HepG2 (cell line): ENCODE measurements at regions of chr2 and their contacts with region 1.

Region 1: DNA sequence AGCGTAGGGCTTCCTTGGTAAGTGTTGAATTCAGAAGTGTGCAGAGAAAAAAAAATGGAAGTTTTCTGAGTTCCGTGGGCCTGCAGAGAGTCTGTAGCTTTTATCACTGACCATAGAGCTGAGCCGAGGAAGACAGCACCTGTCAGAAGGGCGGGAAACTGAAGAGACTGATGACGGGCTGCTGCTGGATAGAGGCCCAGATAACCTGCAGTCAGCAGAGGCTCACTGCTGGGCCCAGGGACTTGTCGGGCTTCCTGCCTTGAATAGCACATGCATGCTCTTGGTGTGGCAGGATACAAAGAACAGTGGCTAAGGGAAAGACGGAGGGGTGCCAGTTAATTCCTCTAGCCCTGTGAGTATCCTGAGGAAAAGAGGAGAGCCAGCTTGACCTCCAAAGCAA is 166.4 kb downstream of the MGAT5 start:
- DNase-seq: no peak
- ATAC-seq: peak; percentile 46
- H3K4me3 ChIP-seq: no peak overlapping the region
- H3K27ac ChIP-seq: no peak overlapping the region
- H3K4me1 ChIP-seq: peaks cover 64% of the 10 kb centered on the region
- H3K27me3 ChIP-seq: no peaks in the 10 kb centered on the region
- CTCF ChIP-seq: no peak
- EP300 ChIP-seq: no peak
- POLR2A ChIP-seq: no peak
- RAD21 ChIP-seq: no peak

Region 2: GRCh38 chr2:134431838-134432434 is 11.7 kb after region 1 on chr2:
- CTCF ChIA-PET with region 1: no interaction called
- POLR2A ChIA-PET with region 1: interaction called, 124 read pairs
- in situ Hi-C with region 1: no loop called
- intact Hi-C with region 1: no loop called
- DNase-seq: no peak
- ATAC-seq: peak; percentile 11
- H3K4me3 ChIP-seq: no peak overlapping the region; a peak in 1 of 6 replicates
- H3K27ac ChIP-seq: peak overlapping the region; percentile 56
- H3K4me1 ChIP-seq: peaks cover 65% of the 10 kb centered on the region
- H3K27me3 ChIP-seq: no peaks in the 10 kb centered on the region
- CTCF ChIP-seq: no peak
- EP300 ChIP-seq: no peak
- POLR2A ChIP-seq: no peak
- RAD21 ChIP-seq: no peak

Region 3: GRCh38 chr2:134508391-134508790 is 88.1 kb after region 1 on chr2:
- CTCF ChIA-PET with region 1: no interaction called
- POLR2A ChIA-PET with region 1: no interaction called
- in situ Hi-C with region 1: no loop called
- intact Hi-C with region 1: no loop called
- DNase-seq: no peak
- ATAC-seq: no peak
- H3K4me3 ChIP-seq: no peak overlapping the region
- H3K27ac ChIP-seq: no peak overlapping the region
- H3K4me1 ChIP-seq: no peaks in the 10 kb centered on the region
- H3K27me3 ChIP-seq: peaks cover 2 to 57% of the 10 kb centered on the region in 2 experiments; a peak in 4 of 5 replicates
- CTCF ChIP-seq: no peak
- EP300 ChIP-seq: no peak
- POLR2A ChIP-seq: no peak
- RAD21 ChIP-seq: no peak

Region 4: DNA sequence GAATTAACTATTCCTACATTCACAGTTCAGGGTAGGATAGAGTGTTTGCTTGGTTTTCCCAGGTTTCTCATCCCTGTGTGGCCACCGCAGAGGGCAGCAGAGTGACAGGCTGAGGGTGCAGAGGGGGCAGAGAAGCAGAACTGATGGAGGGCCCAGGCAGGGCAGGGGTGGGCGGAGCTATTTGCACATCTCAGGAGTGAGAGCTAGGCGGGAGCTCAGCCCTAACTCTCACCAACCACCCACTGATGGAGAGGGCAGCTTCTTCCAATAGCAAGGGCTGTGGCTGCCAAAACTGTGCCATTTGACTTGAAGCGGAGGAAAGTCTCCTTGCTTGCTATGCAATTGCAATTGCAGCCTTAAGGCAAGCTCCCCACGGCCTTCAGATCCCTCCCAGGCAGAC is 1577.1 kb after region 1 on chr2:
- CTCF ChIA-PET with region 1: no interaction called
- POLR2A ChIA-PET with region 1: no interaction called
- in situ Hi-C with region 1: no loop called
- intact Hi-C with region 1: no loop called
- DNase-seq: peak; percentile 53
- ATAC-seq: peak; percentile 99
- H3K4me3 ChIP-seq: no peak overlapping the region
- H3K27ac ChIP-seq: no peak overlapping the region
- H3K4me1 ChIP-seq: no peaks in the 10 kb centered on the region
- H3K27me3 ChIP-seq: no peaks in the 10 kb centered on the region
- CTCF ChIP-seq: peak; percentile 74
- EP300 ChIP-seq: no peak
- POLR2A ChIP-seq: no peak
- RAD21 ChIP-seq: peak; percentile 39; the same call in 1 of the 2 replicates